ENCODE measurements at regions of chr11 and their contacts with region 1.

Region 1: GRCh38 chr11:128195057-128195751 is 392.2 kb downstream of the ETS1 start:
- DNase-seq: peak; percentile 42

Region 2: GRCh38 chr11:128365044-128365443 is 169.8 kb after region 1 on chr11:
- in situ Hi-C with region 1: no loop called
- DNase-seq: peak; percentile 9

Region 3: GRCh38 chr11:128379587-128380580 is 184.7 kb after region 1 on chr11:
- in situ Hi-C with region 1: no loop called
- DNase-seq: no peak

Region 4: DNA sequence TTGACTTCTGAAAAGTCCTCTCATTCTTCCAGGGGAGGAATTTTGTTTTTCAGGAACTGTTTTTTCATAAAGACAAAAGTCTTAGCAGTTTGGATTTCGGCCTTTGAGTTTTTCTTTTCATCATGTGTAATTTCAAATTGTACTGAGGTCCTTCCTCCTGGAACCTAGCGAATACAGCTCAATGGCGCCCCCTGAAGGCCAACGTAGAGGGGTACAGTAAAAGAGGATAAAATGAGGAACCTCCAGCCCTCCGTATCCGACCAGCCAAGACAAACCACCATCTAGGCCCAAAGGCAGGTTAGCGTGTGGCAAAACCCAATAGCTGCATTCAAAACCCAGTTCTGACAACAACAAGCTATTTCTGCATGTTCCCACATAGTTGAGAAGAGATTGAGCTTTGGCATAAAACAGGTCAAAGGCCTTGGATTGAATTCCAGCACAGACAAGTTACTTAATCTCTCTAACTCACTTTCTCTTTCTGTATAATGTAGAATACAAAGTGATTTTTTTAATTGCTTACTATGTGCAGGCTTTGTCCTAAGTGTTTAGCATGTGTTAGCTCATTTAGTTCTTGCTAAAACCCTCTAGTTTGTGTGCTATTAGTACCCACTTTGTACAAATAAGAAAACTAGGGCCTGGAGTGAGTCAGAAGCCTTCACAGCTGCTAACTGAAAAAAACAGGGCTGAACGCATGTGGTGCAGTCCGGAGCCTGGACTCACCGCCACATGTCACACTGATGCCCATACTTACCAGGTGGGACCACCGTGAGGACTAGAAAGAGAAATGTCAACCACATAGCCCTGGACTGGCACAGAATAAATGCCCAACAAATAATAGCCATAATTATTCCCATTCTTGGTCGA is 435.4 kb after region 1 on chr11:
- in situ Hi-C with region 1: loop called (anchors 25 kb)
- DNase-seq: peak; percentile 93

Region 5: GRCh38 chr11:128831174-128832120 is 636.2 kb after region 1 on chr11:
- in situ Hi-C with region 1: loop called (anchors 25 kb)
- DNase-seq: peak; percentile 90

Measured in KBM-7 (cell line).